Caco-2 (cell line): ENCODE measurements at regions of chr2 and their contacts with region 1.

Region 1: GRCh38 chr2:74025971-74026612 is 41.4 kb downstream of the TET3 start:
- DNase-seq: no peak
- H3K4me3 ChIP-seq: no peak overlapping the region
- H3K4me3 Mint-ChIP-seq: no peak overlapping the region
- H3K27ac Mint-ChIP-seq: no peak overlapping the region
- H3K4me1 ChIP-seq: no peaks in the 10 kb centered on the region; the same call in 1 of the 2 replicates
- H3K4me1 Mint-ChIP-seq: no peaks in the 10 kb centered on the region
- H3K27me3 ChIP-seq: no peaks in the 10 kb centered on the region
- H3K27me3 Mint-ChIP-seq: no peaks in the 10 kb centered on the region
- CTCF ChIP-seq: no peak

Region 2: DNA sequence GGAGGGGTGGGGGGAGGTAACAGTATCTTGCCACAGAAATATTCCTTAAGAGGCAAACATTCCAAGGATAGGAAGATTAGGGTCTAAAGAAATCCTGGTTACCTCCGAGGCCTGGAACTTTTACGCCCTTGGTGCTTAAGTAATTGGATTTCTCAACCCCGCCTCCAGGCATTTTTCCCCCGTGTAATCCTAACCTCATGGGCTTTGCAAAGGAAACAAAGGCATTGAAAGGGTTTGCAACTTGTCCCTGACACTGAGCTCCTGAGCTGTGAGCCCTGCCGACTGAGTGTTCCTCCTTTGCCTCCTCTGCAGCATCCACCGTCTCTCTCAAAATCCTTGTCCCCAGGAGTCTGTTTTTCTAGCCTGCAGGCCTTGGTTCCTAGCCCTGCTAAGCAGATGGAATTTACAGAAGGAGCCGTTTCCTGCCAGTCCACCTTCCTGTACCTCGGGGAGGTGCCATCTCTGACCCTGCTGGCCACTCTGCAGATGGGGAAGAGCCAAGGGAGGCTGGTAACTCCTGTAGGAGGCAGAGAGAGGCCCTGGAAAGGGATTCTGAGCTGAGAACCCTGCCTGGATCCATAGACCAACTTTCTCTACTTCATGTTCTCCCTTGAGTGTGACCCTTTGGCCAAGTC is 17.2 kb before region 1 on chr2:
- CTCF ChIA-PET with region 1: no interaction called
- POLR2A ChIA-PET with region 1: no interaction called
- intact Hi-C with region 1: loop called (anchors 1 kb)
- DNase-seq: no peak
- H3K4me3 ChIP-seq: no peak overlapping the region
- H3K4me3 Mint-ChIP-seq: no peak overlapping the region
- H3K27ac Mint-ChIP-seq: no peak overlapping the region
- H3K4me1 ChIP-seq: 0 out of 2 replicates have a peak, but pooled peaks cover 16% of the 10 kb centered on the region
- H3K4me1 Mint-ChIP-seq: peaks cover 25% of the 10 kb centered on the region
- H3K27me3 ChIP-seq: no peaks in the 10 kb centered on the region
- H3K27me3 Mint-ChIP-seq: no peaks in the 10 kb centered on the region
- CTCF ChIP-seq: no peak

Region 3: DNA sequence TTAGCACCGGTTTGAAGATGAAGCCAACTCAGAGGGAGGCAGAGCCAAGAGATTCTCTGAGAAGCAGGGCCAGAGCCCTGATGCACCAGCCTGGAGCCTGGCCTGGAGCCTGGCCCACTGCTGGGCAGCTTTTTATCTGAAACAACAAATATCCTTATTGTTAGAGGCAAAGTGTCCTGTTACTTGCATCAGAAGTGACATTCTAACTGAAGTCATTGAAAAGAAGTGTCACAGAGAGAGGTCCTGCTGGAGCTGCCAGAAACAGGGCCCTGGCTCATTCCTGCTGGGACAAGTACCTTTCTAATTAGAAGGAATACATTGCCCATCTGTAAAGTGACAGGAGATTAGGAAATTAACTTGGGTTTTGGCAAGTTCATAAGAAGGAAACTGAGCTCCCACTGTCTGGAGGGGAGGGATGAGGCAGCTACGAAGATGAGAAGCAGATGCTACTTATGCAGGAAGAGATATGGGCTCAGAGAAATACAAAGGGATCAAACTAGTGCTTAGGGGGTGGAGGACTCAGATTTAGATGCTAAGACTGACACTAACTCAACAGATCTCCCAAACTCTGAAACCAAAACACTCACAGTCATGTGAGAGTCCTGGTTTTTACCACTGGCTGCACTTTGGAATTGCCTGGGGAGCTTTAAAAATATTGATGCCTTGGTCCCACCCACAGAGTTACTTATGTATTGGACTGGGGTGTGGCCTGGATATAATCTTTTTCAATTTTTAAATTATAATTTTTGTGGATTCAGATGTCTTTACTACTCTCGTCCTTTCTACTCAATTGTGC is 796.9 kb after region 1 on chr2:
- CTCF ChIA-PET with region 1: no interaction called
- POLR2A ChIA-PET with region 1: no interaction called
- intact Hi-C with region 1: no loop called
- DNase-seq: no peak
- H3K4me3 ChIP-seq: no peak overlapping the region
- H3K4me3 Mint-ChIP-seq: no peak overlapping the region
- H3K27ac Mint-ChIP-seq: peak overlapping the region; percentile 9
- H3K4me1 ChIP-seq: no peaks in the 10 kb centered on the region
- H3K4me1 Mint-ChIP-seq: peaks cover 5% of the 10 kb centered on the region
- H3K27me3 ChIP-seq: no peaks in the 10 kb centered on the region
- H3K27me3 Mint-ChIP-seq: no peaks in the 10 kb centered on the region
- CTCF ChIP-seq: no peak